Breast epithelium (tissue), 4 donors: ENCODE measurements at regions of chr10 and their contacts with region 1.

Region 1: GRCh38 chr10:70293169-70293813 is 9.5 kb upstream of the NPFFR1 start:
- DNase-seq: no peak
- H3K4me3 ChIP-seq: no peak overlapping the region
- H3K27ac ChIP-seq: no peak overlapping the region
- H3K4me1 ChIP-seq: no peaks in the 10 kb centered on the region
- H3K27me3 ChIP-seq: no peaks in the 10 kb centered on the region
- CTCF ChIP-seq: no peak
- POLR2A ChIP-seq: no peak

Region 2: DNA sequence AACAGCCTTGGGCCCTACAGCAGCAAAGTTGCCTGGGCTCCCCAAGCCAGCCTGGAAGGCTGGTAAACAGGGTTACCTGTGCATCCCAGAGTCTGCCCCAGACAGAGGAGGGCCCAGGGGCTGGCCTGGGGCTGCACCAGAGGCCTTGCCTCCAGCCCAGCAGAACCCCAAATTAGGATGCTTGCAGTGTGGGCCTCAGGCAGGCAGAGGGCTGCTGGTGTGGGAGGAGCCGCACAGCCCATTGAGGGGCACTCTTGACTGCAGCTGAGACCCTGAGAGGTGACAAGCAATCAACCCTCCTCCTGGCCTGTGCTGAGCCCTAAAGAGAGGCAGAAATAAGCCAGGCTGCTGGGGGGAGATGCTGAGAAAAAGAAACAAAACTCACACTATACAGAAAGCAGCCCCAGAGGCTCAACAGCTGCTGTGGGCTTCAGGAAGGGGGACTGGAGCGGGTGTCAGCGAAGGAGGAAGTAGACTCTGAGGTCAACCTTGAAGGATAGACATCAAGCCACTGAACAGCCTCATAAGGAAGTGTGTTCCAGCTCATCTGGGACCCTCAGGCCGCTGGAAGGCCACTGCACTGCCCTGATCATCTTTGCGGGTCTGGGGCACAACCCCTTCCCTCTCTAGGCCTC is 167.3 kb before region 1 on chr10:
- intact Hi-C with region 1: no loop called
- DNase-seq: no peak
- H3K4me3 ChIP-seq: no peak overlapping the region
- H3K27ac ChIP-seq: no peak overlapping the region
- H3K4me1 ChIP-seq: no peaks in the 10 kb centered on the region
- H3K27me3 ChIP-seq: no peaks in the 10 kb centered on the region
- CTCF ChIP-seq: no peak
- POLR2A ChIP-seq: no peak

Region 3: GRCh38 chr10:70705121-70705861 is 412.0 kb after region 1 on chr10:
- intact Hi-C with region 1: loop called (anchors 5 kb)
- DNase-seq: no peak
- H3K4me3 ChIP-seq: no peak overlapping the region
- H3K27ac ChIP-seq: no peak overlapping the region
- H3K4me1 ChIP-seq: no peaks in the 10 kb centered on the region
- H3K27me3 ChIP-seq: no peaks in the 10 kb centered on the region
- CTCF ChIP-seq: no peak
- POLR2A ChIP-seq: no peak